Activated B cell treated with CpG ODN at 0.5 μM for 24 hours (primary cell): ENCODE measurements at regions of chr3 and their contacts with region 1.

Region 1: GRCh38 chr3:69084326-69085167 is at the start of gene ARL6IP5:
- DNase-seq: peak; percentile 76
- ATAC-seq: peak; percentile 72
- H3K4me3 Mint-ChIP-seq: peak within 1 kb of the TSS; percentile 96
- H3K27ac Mint-ChIP-seq: peak within 1 kb of the TSS; percentile 95
- H3K4me1 Mint-ChIP-seq: peaks cover 81% of the 10 kb centered on the region
- H3K27me3 Mint-ChIP-seq: no peaks in the 10 kb centered on the region
- CTCF ChIP-seq: no peak
- total RNA-seq, gene ARL6IP5: 77.5 and 77.8 TPM in 2 replicates

Region 2: DNA sequence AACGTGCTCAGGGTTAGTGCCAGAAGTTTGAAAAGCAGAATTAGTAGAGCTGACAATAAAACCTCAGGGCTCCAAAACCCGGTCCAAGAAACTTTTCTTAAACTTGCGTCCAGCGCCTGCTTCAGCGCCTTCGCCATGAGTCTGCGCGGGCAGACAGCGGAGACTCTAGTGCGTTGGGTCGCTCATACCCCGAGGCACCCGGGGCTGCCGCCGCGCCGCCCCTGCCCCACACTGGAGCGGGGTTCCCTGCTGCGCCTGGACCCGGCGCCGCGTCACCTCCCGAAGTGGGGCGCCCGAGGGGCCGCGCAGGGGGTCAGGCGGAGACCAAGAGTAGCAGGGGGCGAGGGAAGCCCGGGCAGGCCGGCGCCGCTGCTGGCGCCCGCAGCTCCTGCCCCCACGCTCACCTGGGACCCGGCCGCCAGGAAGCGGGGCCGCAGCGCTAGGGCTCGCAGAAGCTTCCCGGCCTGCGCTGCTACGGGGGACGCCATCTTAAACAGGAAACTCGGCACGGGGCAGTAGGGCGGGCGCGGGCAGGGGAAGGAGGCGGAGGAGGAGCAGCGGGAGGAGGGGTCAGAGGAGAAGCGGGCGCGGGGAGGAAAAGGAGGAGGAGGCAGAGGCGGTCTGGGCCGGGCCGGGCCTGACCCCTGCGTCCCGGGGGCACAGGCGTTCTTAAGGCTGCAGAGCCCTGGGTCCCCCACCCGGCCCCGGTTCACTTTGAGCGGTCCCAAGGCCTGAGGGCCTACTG is 1430.3 kb before region 1 on chr3 and contains the start of gene SUCLG2:
- CTCF ChIA-PET with region 1: no interaction called
- POLR2A ChIA-PET with region 1: no interaction called
- intact Hi-C with region 1: loop called (anchors 2 kb)
- DNase-seq: peak; percentile 80
- ATAC-seq: peak; percentile 83
- H3K4me3 Mint-ChIP-seq: peak within 1 kb of the TSS; percentile 86
- H3K27ac Mint-ChIP-seq: peak within 1 kb of the TSS; percentile 87
- H3K4me1 Mint-ChIP-seq: peaks cover 63% of the 10 kb centered on the region
- H3K27me3 Mint-ChIP-seq: no peaks in the 10 kb centered on the region
- CTCF ChIP-seq: no peak
- total RNA-seq, gene SUCLG2: 38.9 and 40.8 TPM in 2 replicates

Region 3: DNA sequence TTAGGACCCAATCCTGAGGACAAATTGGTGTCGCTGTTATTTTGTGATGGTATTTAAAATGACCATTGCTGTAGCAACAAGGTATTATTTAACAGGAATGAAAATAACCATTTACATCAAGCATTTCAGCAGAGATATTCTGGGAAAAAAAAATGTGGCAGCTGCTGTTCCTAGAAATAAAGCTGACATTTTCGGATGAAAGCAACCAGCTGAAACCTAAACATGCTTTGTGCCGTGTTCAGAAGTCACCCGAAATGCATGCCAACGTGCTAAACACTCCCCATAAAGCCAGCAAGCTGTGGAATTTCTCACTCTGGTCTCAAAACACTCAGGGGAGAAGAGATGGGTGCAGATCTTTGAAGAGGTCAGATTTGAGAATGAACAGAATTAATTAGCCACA is 120.7 kb before region 1 on chr3:
- CTCF ChIA-PET with region 1: no interaction called
- POLR2A ChIA-PET with region 1: no interaction called
- intact Hi-C with region 1: no loop called
- DNase-seq: no peak
- ATAC-seq: no peak
- H3K4me3 Mint-ChIP-seq: no peak overlapping the region
- H3K27ac Mint-ChIP-seq: no peak overlapping the region
- H3K4me1 Mint-ChIP-seq: no peaks in the 10 kb centered on the region
- H3K27me3 Mint-ChIP-seq: peaks cover 19% of the 10 kb centered on the region
- CTCF ChIP-seq: no peak

Region 4: DNA sequence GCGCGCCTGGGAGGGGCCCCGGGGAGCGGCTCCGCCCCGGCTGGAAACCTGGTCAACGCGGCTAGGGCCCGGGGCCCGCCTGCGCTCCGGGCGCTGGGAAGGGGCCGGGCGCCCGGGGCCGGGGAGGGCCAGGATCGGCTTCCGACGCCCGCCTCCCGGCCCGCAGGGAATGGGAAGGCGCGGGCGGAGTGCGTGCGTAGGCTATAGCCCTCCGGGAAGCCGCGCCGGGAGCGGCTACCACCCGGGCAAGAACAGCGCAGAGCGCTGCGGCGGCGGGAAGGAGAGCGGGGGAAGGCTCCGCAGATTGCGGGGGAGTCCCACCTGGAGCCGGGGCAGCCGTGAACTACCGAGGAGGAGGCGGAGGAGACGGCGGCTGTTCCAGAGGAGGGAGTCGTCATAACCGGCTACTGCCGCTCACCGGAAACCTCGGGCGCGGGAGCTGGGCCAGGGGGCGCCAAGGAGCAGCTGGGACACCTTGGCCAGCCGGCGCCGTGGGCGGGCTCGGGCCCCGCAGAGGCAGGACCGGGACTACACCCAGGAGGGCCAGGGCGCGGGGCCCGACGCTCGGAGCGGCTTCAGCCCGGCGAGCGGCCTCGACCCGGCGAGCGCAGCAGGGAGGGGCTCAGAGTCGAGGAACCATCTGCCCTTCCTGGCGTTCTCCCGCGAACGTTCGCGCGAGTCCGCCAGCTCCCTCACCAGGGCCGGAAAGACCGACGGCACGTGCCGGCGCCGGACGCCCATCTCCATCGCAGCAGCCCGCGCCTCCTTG is 71.1 kb before region 1 on chr3 and contains the start of gene EOGT:
- CTCF ChIA-PET with region 1: no interaction called
- POLR2A ChIA-PET with region 1: interaction called, 7 read pairs
- intact Hi-C with region 1: loop called (anchors 1 kb)
- DNase-seq: peak; percentile 80
- ATAC-seq: peak; percentile 88
- H3K4me3 Mint-ChIP-seq: peak within 1 kb of the TSS; percentile 85
- H3K27ac Mint-ChIP-seq: peak within 1 kb of the TSS; percentile 61
- H3K4me1 Mint-ChIP-seq: peaks cover 9% of the 10 kb centered on the region
- H3K27me3 Mint-ChIP-seq: no peaks in the 10 kb centered on the region
- CTCF ChIP-seq: no peak
- total RNA-seq, gene EOGT: 14.4 and 17.3 TPM in 2 replicates

Region 5: GRCh38 chr3:69051756-69052471 is 32.6 kb before region 1 on chr3 and contains the start of gene TMF1:
- CTCF ChIA-PET with region 1: interaction called, 6 read pairs
- POLR2A ChIA-PET with region 1: interaction called, 109 read pairs
- intact Hi-C with region 1: loop called (anchors 1 kb)
- DNase-seq: peak; percentile 92
- ATAC-seq: peak; percentile 86
- H3K4me3 Mint-ChIP-seq: peak within 1 kb of the TSS; percentile 95
- H3K27ac Mint-ChIP-seq: peak within 1 kb of the TSS; percentile 98
- H3K4me1 Mint-ChIP-seq: peaks cover 49% of the 10 kb centered on the region
- H3K27me3 Mint-ChIP-seq: no peaks in the 10 kb centered on the region
- CTCF ChIP-seq: no peak
- total RNA-seq, gene TMF1: 36.8 and 43.6 TPM in 2 replicates

Region 6: DNA sequence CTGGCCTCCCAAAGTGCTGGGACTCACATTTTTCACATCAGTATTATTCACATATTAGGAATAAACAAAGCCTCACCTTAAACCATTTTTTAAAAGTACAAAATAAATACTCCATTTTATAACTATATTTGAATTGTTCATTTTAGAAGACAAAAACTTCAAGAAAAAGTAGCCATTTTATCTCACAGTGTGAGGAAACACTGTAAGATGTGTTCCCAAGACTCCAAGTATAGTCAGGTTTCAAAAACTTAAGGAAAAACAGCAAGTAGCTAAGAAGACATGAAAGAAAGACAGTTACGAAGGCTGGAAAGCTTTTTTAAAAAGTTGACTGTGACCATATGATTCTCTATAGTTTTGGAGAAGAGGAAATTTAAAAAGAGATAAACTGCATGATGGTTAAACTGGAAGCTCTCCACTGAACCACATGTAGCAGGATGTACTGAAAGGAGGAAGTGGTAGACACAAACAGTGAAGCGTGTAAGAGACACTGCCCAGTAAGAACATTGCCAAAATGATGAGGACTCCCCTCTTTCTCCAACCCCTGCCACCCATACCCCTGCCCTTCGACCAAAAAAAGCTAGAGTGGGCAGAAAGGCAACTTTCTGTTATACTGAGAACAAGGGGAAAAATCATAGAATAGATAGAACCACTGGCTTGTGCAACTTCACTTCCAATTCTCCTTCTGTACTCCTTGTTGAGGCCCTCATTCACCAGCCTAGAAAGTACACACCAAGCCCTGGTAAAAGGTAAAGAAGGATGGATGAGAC is 26.2 kb before region 1 on chr3:
- CTCF ChIA-PET with region 1: no interaction called
- POLR2A ChIA-PET with region 1: interaction called, 109 read pairs
- intact Hi-C with region 1: loop called (anchors 1 kb)
- DNase-seq: no peak
- ATAC-seq: peak; percentile 99
- H3K4me3 Mint-ChIP-seq: peak overlapping the region; percentile 47
- H3K27ac Mint-ChIP-seq: peak overlapping the region; percentile 92
- H3K4me1 Mint-ChIP-seq: peaks cover 27% of the 10 kb centered on the region
- H3K27me3 Mint-ChIP-seq: no peaks in the 10 kb centered on the region
- CTCF ChIP-seq: no peak

Region 7: DNA sequence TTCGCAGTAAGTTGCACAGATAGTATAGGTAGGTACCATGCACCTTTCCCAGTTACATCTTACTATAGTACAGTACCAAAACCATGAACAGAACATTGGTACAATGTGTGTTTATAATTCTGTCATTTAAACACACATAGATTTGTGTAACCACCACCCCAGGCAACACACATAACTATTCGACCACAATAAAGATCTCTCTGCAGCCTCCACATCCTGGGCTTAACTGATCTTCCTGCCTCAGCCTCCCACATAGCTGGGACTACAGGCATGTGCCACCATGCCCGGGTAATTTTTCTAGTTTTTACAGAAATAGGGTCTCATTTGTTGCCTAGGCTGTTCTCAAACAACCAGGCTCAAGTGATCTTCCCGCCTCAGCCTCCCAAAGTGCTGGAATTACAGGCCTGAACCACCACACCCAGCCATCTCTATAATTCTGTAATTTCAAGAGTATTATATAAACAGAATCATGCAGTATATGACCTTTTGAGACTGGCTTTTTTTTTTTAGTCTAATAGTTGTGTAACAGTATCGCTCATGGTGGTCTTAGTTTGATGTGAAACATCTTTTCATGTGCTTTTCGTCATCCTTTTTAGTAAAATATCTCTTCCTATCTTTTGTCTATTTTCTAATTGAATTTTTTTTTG is 19.1 kb before region 1 on chr3:
- CTCF ChIA-PET with region 1: no interaction called
- POLR2A ChIA-PET with region 1: interaction called, 18 read pairs
- intact Hi-C with region 1: loop called (anchors 1 kb)
- DNase-seq: no peak
- ATAC-seq: no peak
- H3K4me3 Mint-ChIP-seq: no peak overlapping the region
- H3K27ac Mint-ChIP-seq: no peak overlapping the region
- H3K4me1 Mint-ChIP-seq: peaks cover 9% of the 10 kb centered on the region
- H3K27me3 Mint-ChIP-seq: no peaks in the 10 kb centered on the region
- CTCF ChIP-seq: no peak